ENCODE measurements at regions of chr5 and their contacts with region 1.

Region 1: GRCh38 chr5:36690041-36690961 is 83.9 kb downstream of the SLC1A3 start:
- DNase-seq: peak; percentile 14 to 69 (median 31)
- H3K4me3 ChIP-seq: peak overlapping the region; percentile 53
- H3K4me3 Mint-ChIP-seq: peak overlapping the region; percentile 71 to 93 (median 89)
- H3K27ac ChIP-seq: no peak overlapping the region
- H3K27ac Mint-ChIP-seq: peak overlapping the region in 5 of 8 donors; percentile 31 to 75 (median 45)
- H3K4me1 ChIP-seq: peaks cover 8% of the 10 kb centered on the region
- H3K4me1 Mint-ChIP-seq: peaks cover 10 to 14% (median 12%) of the 10 kb centered on the region in 3 donors
- H3K27me3 ChIP-seq: no peaks in the 10 kb centered on the region
- H3K27me3 Mint-ChIP-seq: peaks cover 12 to 31% of the 10 kb centered on the region in 2 donors

Region 2: GRCh38 chr5:36657563-36657995 is 32.7 kb before region 1 on chr5:
- CTCF ChIA-PET with region 1: no interaction called
- POLR2A ChIA-PET with region 1: no interaction called
- DNase-seq: no peak
- H3K4me3 ChIP-seq: no peak overlapping the region
- H3K4me3 Mint-ChIP-seq: no peak overlapping the region
- H3K27ac ChIP-seq: no peak overlapping the region
- H3K27ac Mint-ChIP-seq: no peak overlapping the region
- H3K4me1 ChIP-seq: no peaks in the 10 kb centered on the region
- H3K4me1 Mint-ChIP-seq: no peaks in the 10 kb centered on the region
- H3K27me3 ChIP-seq: no peaks in the 10 kb centered on the region
- H3K27me3 Mint-ChIP-seq: peaks cover 7 to 17% of the 10 kb centered on the region in 2 donors

Region 3: DNA sequence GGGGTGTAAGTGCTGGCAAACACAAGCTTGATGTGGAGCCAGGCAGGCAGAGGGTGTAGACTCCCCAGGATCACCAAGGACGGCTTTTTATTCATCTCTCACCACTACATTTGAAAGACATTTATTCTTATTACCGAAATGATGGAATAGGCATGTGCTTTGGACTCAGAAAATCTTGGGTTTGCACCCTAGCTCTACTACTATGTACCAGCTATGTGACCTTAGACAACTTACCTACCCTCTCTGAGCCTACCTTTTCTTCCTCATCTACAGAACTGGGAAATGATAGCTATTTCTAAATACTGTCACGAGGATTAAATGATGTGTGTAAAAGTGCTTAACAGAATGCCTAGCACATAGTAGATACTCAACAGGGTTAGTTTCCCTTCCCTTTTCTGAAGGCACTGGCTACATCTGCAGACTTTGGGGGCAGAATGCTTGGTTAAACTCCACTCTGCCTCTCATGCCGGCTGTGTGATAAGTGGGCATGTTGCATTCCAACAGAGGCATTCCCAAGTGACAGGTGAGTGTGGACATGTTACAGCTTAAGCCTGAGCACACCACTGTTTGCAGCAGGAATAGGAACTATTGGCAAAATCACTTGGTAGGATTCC is 10.9 kb after region 1 on chr5:
- CTCF ChIA-PET with region 1: interaction called, 13 read pairs
- POLR2A ChIA-PET with region 1: no interaction called
- DNase-seq: no peak
- H3K4me3 ChIP-seq: no peak overlapping the region
- H3K4me3 Mint-ChIP-seq: no peak overlapping the region
- H3K27ac ChIP-seq: no peak overlapping the region
- H3K27ac Mint-ChIP-seq: no peak overlapping the region
- H3K4me1 ChIP-seq: no peaks in the 10 kb centered on the region
- H3K4me1 Mint-ChIP-seq: no peaks in the 10 kb centered on the region
- H3K27me3 ChIP-seq: no peaks in the 10 kb centered on the region
- H3K27me3 Mint-ChIP-seq: peaks cover 5 to 16% of the 10 kb centered on the region in 2 donors

Measured in CD8-positive, alpha-beta memory T cell (primary cell).